ENCODE measurements at regions of chrX and their contacts with region 1.

Region 1: GRCh38 chrX:101359966-101360365 is 11.4 kb upstream of the TIMM8A start:
- DNase-seq: no peak
- ATAC-seq: no peak

Region 2: GRCh38 chrX:100244681-100245080 is 1115.3 kb before region 1 on chrX:
- intact Hi-C with region 1: loop called (anchors 10 kb)
- DNase-seq: no peak
- ATAC-seq: no peak